ENCODE measurements at regions of chr12 and their contacts with region 1.

Region 1: DNA sequence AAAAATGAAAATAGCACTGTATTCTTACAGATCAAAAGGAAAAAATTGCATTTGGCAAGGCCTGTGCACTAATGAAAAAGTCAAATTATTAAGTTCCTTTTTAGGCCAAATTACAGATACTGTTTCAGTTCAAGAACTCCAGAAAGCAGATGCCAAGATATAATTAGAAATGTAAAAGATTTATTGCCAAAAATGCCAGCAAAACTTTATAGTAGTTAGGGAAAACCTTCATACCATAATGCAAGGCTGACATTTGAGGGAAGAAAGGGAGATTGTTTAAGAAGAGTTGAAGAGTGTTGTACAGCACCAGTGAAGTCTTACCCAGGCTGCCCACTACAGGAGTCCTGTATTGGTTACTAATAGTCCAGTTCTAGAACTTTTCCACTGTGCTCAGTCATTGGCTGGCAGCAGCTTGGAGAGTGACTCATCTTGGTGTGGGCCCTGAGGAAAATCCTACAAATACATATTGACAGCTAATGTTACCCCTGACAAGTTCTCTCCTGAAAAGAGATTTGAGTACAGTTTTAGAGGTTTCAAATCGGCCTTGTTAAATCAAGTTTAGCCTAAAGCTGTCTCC is 600.4 kb downstream of the C12orf50 start:
- DNase-seq: no peak
- H3K4me3 ChIP-seq: no peak overlapping the region
- H3K4me3 Mint-ChIP-seq: no peak overlapping the region
- H3K27ac Mint-ChIP-seq: no peak overlapping the region
- H3K4me1 ChIP-seq: peaks cover 19% of the 10 kb centered on the region
- H3K4me1 Mint-ChIP-seq: peaks cover 11% of the 10 kb centered on the region
- H3K27me3 ChIP-seq: no peaks in the 10 kb centered on the region
- H3K27me3 Mint-ChIP-seq: no peaks in the 10 kb centered on the region
- CTCF ChIP-seq: no peak

Region 2: DNA sequence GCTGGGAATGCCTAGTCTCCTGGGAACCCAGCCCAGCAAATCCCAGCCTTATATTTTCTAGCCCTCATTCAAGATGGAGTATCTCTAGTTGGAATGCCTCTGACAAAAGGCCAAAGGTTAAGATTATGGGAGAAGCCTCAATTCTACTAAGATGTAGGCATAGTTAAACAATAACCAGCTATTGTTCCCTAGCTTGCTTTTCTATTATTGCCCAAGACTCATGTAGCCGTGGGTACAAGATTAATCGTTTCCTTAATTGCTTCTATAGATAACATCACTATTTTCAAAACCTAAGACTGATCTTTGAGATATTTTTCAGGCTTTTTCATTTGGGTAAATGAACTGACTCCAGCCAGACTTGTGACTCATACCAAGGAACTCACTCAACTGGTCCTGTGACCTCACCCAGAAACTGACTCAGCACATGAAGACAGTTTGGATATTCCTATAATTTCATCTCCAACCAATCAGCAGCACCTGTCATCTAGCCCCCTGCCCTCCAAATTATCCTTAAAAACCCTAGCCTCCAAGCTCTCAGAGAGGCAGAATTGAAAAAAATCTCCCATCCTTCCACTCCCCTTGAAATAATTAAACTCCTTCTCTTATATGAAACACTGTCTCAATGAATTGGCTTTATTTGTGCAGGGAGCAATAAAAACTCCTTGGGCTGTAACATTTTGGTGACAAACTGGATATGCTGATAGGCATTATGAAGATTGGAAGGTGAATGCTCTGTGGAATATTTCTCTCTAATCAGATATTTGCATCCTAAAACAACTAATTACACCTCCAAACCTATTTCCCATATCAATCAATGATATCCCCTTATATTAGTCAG is 11.4 kb after region 1 on chr12:
- CTCF ChIA-PET with region 1: no interaction called
- POLR2A ChIA-PET with region 1: no interaction called
- intact Hi-C with region 1: loop called (anchors 1 kb)
- DNase-seq: peak; percentile 58 to 70
- H3K4me3 ChIP-seq: no peak overlapping the region
- H3K4me3 Mint-ChIP-seq: peak overlapping the region; percentile 7
- H3K27ac Mint-ChIP-seq: peak overlapping the region; percentile 36
- H3K4me1 ChIP-seq: peaks cover 39% of the 10 kb centered on the region
- H3K4me1 Mint-ChIP-seq: peaks cover 14% of the 10 kb centered on the region
- H3K27me3 ChIP-seq: no peaks in the 10 kb centered on the region
- H3K27me3 Mint-ChIP-seq: no peaks in the 10 kb centered on the region
- CTCF ChIP-seq: no peak

Measured in Caco-2 (cell line).